T-cell (primary cell): ENCODE measurements at regions of chr7 and their contacts with region 1.

Region 1: GRCh38 chr7:65307651-65308299 is 65.9 kb upstream of the ZNF92 start:
- DNase-seq: peak in 33 of 35 experiments; percentile 3 to 72 (median 25)
- ATAC-seq: peak in 3 of 4 experiments; percentile 53 to 73 (median 63)
- H3K4me3 ChIP-seq: no peak overlapping the region
- H3K4me3 Mint-ChIP-seq: no peak overlapping the region
- H3K27ac ChIP-seq: no peak overlapping the region
- H3K27ac Mint-ChIP-seq: no peak overlapping the region
- H3K4me1 ChIP-seq: peaks cover 0 to 3% of the 10 kb centered on the region in 2 experiments
- H3K4me1 Mint-ChIP-seq: no peaks in the 10 kb centered on the region
- H3K27me3 ChIP-seq: peaks cover 0 to 6% of the 10 kb centered on the region in 2 experiments
- H3K27me3 Mint-ChIP-seq: peaks cover 0 to 3% of the 10 kb centered on the region in 2 donors

Region 2: DNA sequence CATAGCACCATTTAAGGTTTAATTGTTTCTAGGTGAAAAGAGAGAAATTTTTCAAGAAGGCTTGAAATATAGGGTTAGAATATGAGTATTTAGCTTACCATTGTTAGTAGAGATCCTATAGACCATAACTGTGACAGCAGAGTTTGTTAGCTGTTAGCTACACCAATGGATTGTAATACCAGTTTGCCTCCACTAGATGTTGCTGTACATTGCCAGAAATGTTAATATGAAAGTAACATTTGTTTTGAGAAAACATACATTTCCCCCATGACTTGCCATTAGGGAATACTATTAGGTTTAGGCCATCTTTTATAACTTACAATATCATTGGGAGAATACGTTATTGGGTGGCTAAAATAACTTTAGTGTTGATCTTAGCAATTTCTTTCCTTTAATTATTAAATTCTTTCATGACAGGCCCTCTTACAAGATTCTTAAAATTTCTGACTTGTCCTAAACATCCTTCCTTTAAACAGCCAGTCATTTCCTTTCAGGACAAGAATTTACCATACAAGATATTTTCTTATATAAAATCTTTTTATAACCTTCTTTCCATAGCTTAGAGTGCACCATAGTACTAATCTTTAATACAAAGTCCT is 356.4 kb before region 1 on chr7:
- CTCF ChIA-PET with region 1: interaction called, 3 to 22 read pairs
- POLR2A ChIA-PET with region 1: no interaction called
- DNase-seq: peak in 2 of 35 experiments; percentile 15 to 59
- ATAC-seq: peak in 2 of 4 experiments; percentile 44 to 58
- H3K4me3 ChIP-seq: no peak overlapping the region
- H3K4me3 Mint-ChIP-seq: no peak overlapping the region
- H3K27ac ChIP-seq: no peak overlapping the region
- H3K27ac Mint-ChIP-seq: no peak overlapping the region
- H3K4me1 ChIP-seq: peaks cover 0 to 12% of the 10 kb centered on the region in 2 experiments
- H3K4me1 Mint-ChIP-seq: peaks cover 4 to 6% (median 6%) of the 10 kb centered on the region in 3 donors
- H3K27me3 ChIP-seq: peaks cover 2 to 27% of the 10 kb centered on the region in 2 experiments
- H3K27me3 Mint-ChIP-seq: peaks cover 30 to 40% of the 10 kb centered on the region in 2 donors

Region 3: DNA sequence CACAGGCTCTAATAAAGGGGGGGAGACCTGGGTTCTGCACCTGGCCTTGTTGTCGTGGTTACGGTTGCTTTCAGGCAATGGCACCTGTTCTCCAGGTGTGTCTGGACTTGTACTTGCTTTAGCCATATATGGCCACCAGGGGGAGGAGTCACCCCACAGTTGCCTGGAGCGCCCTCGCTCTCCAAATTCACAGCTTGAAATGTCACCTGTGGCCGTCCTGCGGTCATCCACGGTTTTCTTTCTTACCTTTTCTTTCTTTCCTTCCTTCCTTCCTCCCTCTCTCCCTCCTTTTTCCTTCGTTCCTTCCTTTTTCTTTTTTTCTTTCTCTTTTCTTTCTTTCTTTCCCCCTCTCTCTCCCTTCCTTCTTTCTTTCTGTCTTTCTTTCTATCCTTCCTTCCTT is 91.3 kb before region 1 on chr7:
- CTCF ChIA-PET with region 1: interaction called in 1 of 2 experiments, 11 read pairs
- POLR2A ChIA-PET with region 1: no interaction called
- DNase-seq: peak in 34 of 35 experiments; percentile 11 to 79 (median 50)
- ATAC-seq: peak; percentile 58 to 75 (median 66)
- H3K4me3 ChIP-seq: no peak overlapping the region
- H3K4me3 Mint-ChIP-seq: no peak overlapping the region
- H3K27ac ChIP-seq: no peak overlapping the region
- H3K27ac Mint-ChIP-seq: no peak overlapping the region
- H3K4me1 ChIP-seq: no peaks in the 10 kb centered on the region
- H3K4me1 Mint-ChIP-seq: peaks cover 4 to 9% (median 6%) of the 10 kb centered on the region in 3 donors
- H3K27me3 ChIP-seq: no peaks in the 10 kb centered on the region
- H3K27me3 Mint-ChIP-seq: peaks cover 0 to 3% of the 10 kb centered on the region in 2 donors